PC-3 (cell line): ENCODE measurements at regions of chr22 and their contacts with region 1.

Region 1: DNA sequence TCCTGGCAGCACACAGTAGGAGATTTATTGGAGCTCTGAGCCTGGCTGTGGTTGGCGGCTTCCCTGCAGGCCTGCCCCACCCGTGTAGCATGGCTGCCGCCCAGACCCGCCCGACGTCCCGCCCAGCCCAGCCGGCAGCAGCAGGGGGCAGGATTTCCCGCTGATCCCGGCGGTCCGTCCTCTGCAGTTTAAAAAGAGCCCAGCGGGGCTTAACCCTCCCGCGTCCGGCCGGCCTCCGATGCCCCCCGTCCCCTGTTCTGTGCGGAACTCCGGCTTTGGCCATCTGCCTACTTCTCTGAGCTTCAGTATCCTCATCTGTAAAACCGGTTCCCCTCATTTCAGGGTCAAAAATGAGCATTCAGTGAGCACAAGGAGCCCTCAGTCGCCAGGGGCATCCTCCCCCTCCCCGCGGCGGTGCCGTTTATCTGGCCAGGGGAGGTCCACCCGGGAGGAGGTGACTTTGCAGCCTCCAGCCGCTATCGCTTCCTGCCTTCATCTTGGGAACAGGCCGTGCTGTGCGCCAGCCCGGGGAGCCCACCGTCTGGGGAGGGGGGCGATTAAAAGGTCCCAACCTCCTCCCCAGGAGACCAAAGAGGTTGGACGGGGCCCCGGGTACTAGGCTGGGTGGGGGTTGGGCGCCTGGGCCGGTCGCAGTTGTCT is at the start of gene GAS2L1:
- DNase-seq: peak; percentile 70
- ATAC-seq: peak; percentile 53
- H3K4me3 ChIP-seq: peak within 1 kb of the TSS; percentile 79
- H3K27ac ChIP-seq: peak within 1 kb of the TSS; percentile 97
- H3K4me1 ChIP-seq: peaks cover 36% of the 10 kb centered on the region
- H3K27me3 ChIP-seq: no peaks in the 10 kb centered on the region
- CTCF ChIP-seq: peak; percentile 49; the same call in 1 of the 2 replicates
- total RNA-seq, gene GAS2L1: 58.4 and 75.7 TPM in 2 replicates

Region 2: DNA sequence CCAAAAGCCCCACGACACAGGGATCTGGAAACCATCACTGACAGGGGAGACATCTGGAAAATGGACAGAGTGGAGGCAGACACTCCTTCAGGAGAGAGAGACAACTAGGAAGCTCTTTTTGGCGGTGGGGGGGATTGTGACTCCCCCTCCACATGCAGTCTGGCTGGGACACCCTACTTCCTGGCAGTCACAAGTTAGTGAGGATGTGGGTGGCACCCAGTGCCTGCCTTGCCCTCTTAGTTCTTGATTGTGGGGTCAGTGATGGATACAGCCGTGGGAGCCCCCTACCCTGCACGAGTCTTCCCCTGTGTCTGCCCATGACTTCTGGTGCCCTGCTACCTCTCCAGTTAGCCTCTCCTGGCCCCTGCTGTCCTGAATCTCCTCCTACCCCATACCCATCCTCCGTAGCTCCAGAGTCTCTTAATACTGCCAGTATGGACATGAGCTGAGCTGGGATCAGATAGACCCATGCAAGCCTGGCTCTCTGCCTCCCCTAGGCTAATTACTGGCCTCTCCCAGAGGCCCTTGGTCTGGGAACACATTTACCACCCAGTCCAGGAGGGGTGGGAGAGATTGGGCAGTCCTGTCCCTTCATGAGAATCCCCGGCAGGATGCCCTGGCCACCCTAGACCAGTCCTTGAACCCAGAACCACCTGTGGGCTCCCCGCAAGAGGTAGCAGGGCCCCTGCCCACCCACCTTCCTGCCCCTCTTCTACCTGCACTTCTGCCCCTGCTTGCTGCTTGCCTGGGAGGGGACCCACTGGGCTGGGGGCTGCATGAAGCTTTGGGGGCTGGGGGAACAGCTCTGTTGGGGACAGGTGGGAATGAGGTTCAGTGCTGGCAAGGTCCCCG is 61.3 kb before region 1 on chr22:
- CTCF ChIA-PET with region 1: no interaction called
- POLR2A ChIA-PET with region 1: no interaction called
- intact Hi-C with region 1: no loop called
- DNase-seq: no peak
- ATAC-seq: no peak; the same call in 1 of the 2 replicates
- H3K4me3 ChIP-seq: no peak overlapping the region
- H3K27ac ChIP-seq: no peak overlapping the region
- H3K4me1 ChIP-seq: no peaks in the 10 kb centered on the region
- H3K27me3 ChIP-seq: no peaks in the 10 kb centered on the region
- CTCF ChIP-seq: no peak

Region 3: DNA sequence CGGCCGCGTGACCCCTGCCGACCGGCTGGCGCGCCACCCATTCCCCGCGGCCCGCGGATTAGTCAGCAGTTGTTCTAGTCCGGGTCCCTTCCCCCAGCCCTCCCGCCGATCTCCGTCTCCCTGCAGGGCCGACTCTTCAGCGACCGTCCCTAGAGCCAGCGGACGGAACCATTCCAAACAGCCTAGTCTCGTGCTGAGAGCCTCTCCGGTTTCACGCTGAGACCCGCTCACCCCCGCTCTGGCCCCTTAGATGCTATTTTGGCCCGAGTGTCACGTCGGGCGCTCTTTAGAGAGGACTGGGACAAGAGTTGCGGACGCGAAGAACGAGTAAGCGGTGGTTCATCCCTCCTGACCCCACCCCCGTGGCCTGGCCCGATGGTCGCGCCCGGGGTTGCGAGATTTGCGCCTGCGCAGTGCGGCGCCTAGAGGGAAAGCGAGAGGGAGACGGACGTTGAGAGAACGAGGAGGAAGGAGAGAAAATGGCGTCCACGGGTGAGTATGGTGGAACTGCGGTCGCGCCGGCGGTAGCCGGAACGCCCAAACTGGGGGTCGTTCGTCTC is 38.4 kb before region 1 on chr22 and contains the starts of genes EWSR1 and RHBDD3:
- CTCF ChIA-PET with region 1: no interaction called
- POLR2A ChIA-PET with region 1: no interaction called
- intact Hi-C with region 1: loop called (anchors 2 kb)
- DNase-seq: peak; percentile 88
- ATAC-seq: peak; percentile 76
- H3K4me3 ChIP-seq: peak within 1 kb of the TSS; percentile 99
- H3K27ac ChIP-seq: peak within 1 kb of the TSS; percentile 97
- H3K4me1 ChIP-seq: peaks cover 27% of the 10 kb centered on the region
- H3K27me3 ChIP-seq: no peaks in the 10 kb centered on the region
- CTCF ChIP-seq: no peak
- total RNA-seq, gene EWSR1: 288 and 321 TPM in 2 replicates
- total RNA-seq, gene RHBDD3: 23.7 and 33.1 TPM in 2 replicates

Region 4: DNA sequence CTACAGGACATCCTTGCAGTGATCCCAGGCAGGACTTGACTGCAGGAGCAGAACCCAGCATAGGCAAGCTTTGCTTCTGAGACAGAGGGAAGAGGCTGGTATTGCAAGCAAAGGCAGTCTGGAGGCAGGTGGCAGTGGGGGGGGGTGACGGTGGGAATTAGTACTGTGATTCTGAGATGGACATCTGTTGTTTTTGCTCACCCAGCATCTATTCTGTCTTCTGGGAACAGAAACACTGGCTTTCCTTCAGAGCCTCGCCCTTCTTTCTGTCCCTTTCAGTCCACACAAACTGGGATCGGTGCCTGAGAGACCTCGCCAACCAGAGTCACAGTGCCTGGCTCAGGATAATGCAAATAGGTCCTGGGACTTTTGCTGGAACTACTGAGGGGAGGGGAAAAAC is 40.4 kb after region 1 on chr22:
- CTCF ChIA-PET with region 1: interaction called, 4 read pairs
- POLR2A ChIA-PET with region 1: no interaction called
- intact Hi-C with region 1: loop called (anchors 5 kb)
- DNase-seq: no peak
- ATAC-seq: no peak
- H3K4me3 ChIP-seq: no peak overlapping the region
- H3K27ac ChIP-seq: no peak overlapping the region
- H3K4me1 ChIP-seq: peaks cover 35% of the 10 kb centered on the region
- H3K27me3 ChIP-seq: no peaks in the 10 kb centered on the region
- CTCF ChIP-seq: no peak

Region 5: DNA sequence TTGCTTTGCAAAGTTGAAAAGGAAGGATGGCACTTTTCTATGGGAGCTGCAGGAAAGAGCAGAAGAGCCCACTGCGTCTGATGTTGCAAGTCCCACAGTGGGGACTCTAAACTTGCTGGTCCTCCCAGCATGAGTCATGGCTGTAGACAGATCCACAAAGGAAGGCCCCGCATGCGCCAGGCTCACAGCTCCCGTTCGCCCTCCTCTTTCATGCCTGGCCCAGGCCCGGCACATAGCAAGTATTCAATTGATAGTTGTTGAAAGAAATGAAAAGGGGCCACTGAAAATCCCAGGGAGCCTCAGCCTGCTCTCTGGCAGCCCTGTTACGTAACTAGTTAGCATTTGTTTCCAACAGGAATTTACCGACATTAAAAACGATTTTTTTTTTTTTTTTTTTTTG is 63.2 kb after region 1 on chr22:
- CTCF ChIA-PET with region 1: no interaction called
- POLR2A ChIA-PET with region 1: interaction called, 13 read pairs
- intact Hi-C with region 1: no loop called
- DNase-seq: no peak
- ATAC-seq: no peak
- H3K4me3 ChIP-seq: no peak overlapping the region
- H3K27ac ChIP-seq: no peak overlapping the region
- H3K4me1 ChIP-seq: no peaks in the 10 kb centered on the region
- H3K27me3 ChIP-seq: no peaks in the 10 kb centered on the region
- CTCF ChIP-seq: no peak